ENCODE measurements at regions of chr1 and their contacts with region 1.

Region 1: DNA sequence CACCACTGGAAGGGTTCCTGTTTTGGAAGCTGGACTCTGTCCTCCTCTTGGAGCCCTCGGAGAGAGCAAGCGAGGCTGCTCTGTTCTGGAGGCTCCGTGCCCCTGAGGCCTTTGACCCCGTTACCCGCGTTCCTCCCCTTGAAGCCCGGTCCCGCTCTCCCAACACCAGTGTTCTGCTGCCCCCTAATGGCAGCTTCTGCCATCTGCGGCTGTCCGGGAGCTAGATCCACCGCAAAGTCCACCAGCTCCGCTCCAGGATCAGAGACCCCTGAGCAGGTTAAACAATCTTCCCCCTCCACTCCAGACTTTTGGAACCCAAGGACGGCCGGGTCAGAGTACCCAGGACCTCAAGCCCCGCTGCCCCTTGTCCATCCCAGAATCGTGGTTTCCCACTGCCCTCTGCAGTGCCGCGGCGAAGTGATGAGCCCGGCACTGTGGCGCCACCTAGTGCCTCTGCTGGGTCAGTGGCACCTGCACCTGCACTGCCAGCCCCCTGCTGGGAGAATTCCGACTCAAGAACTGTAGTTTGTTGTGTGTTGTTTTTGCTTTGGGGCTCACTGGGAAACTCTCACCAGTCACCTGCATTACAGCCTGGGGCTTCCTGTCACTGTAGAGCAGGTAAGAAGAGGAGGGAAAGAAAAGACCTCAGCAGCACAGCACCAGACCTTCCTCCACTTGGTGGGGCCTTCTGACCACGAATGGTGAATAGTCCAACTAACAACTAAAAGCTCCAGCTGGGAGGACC is 63.5 kb upstream of the NFASC start:
- DNase-seq: peak; percentile 94
- H3K4me3 Mint-ChIP-seq: peak overlapping the region; percentile 69
- H3K27ac Mint-ChIP-seq: no peak overlapping the region
- H3K4me1 Mint-ChIP-seq: no peaks in the 10 kb centered on the region
- H3K27me3 Mint-ChIP-seq: peaks cover 25% of the 10 kb centered on the region
- CTCF ChIP-seq: peak; percentile 99

Region 2: DNA sequence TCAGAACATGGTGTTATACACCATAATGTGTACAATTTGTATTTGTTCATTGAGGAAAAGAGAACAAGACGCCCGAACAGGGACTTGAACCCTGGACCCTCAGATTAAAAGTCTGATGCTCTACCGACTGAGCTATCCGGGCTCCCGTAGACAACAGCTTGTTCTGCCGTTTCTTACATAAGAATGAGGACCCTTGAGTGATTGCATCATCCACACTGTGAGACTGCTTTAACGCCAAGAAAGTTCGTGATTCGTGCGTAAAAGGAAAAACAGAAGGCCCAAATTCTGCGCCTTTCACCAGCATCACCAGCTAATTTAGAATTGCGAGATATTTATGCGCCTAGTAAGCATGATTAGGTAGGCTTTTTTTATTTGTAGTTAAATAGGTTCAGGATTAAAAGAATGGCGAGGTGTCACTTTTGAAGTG is 300.1 kb before region 1 on chr1:
- CTCF ChIA-PET with region 1: interaction called, 47 read pairs
- POLR2A ChIA-PET with region 1: interaction called, 8 read pairs
- intact Hi-C with region 1: loop called (anchors 1 kb)
- DNase-seq: peak; percentile 98
- H3K4me3 Mint-ChIP-seq: peak overlapping the region; percentile 77
- H3K27ac Mint-ChIP-seq: peak overlapping the region; percentile 90
- H3K4me1 Mint-ChIP-seq: peaks cover 29% of the 10 kb centered on the region
- H3K27me3 Mint-ChIP-seq: no peaks in the 10 kb centered on the region
- CTCF ChIP-seq: no peak

Region 3: DNA sequence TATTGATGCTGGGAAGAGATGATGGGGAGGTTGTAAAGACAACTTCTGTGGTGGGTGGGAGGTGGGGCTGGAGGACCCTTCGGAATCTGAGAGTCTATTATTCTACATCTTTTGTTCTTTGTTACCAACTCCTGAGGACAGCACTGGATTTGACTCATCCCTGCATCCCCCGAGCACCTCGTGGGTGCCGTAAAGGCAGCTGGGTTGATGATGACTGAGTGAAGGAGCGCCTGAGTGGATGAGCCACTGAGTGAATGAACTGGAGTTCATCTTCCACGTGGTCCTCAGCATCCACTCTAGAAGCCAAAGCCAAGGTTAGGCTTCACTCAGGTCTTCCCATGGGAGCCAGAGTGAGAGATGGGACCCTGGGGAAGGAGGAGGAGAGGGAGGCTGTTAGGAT is 199.2 kb before region 1 on chr1:
- CTCF ChIA-PET with region 1: interaction called, 19 read pairs
- POLR2A ChIA-PET with region 1: no interaction called
- intact Hi-C with region 1: no loop called
- DNase-seq: no peak
- H3K4me3 Mint-ChIP-seq: no peak overlapping the region
- H3K27ac Mint-ChIP-seq: no peak overlapping the region
- H3K4me1 Mint-ChIP-seq: no peaks in the 10 kb centered on the region
- H3K27me3 Mint-ChIP-seq: peaks cover 67% of the 10 kb centered on the region
- CTCF ChIP-seq: no peak

Region 4: GRCh38 chr1:204697893-204698292 is 109.2 kb before region 1 on chr1:
- CTCF ChIA-PET with region 1: interaction called, 24 read pairs
- POLR2A ChIA-PET with region 1: no interaction called
- intact Hi-C with region 1: no loop called
- DNase-seq: peak; percentile 94
- H3K4me3 Mint-ChIP-seq: no peak overlapping the region
- H3K27ac Mint-ChIP-seq: peak overlapping the region; percentile 43
- H3K4me1 Mint-ChIP-seq: peaks cover 18% of the 10 kb centered on the region
- H3K27me3 Mint-ChIP-seq: no peaks in the 10 kb centered on the region
- CTCF ChIP-seq: no peak

Region 5: DNA sequence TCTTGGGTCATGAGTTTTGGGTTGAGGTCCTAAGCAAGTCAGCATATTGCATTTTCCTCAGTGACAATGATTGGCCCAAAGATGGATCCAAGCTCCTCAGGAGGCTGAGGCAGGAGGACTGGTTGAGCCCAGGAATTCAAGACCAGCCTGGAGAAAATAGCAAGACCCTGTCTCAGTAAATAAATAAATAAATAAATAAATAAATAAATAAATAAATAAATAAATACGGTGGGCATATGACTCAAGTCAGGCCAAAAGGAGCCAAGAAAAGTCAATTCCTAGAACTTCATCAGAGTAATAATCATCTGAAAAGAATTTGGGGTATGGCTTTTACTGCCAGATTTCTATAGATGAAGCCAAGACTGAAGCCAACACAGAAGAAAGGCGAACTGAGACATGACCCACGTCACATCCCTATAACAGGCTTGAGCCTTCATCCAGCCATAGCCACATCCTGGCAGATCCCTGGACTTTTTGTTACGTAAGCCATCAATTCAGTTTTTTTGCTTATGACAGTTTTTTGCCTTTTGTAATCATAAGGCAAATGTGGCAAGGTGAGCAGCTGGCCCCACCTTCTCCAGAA is 24.9 kb before region 1 on chr1:
- CTCF ChIA-PET with region 1: interaction called, 32 read pairs
- POLR2A ChIA-PET with region 1: no interaction called
- intact Hi-C with region 1: no loop called
- DNase-seq: peak; percentile 27
- H3K4me3 Mint-ChIP-seq: no peak overlapping the region
- H3K27ac Mint-ChIP-seq: no peak overlapping the region
- H3K4me1 Mint-ChIP-seq: no peaks in the 10 kb centered on the region
- H3K27me3 Mint-ChIP-seq: peaks cover 54% of the 10 kb centered on the region
- CTCF ChIP-seq: no peak

Region 6: GRCh38 chr1:204924013-204924967 is 117.2 kb after region 1 on chr1:
- CTCF ChIA-PET with region 1: interaction called, 13 read pairs
- POLR2A ChIA-PET with region 1: no interaction called
- intact Hi-C with region 1: no loop called
- DNase-seq: no peak
- H3K4me3 Mint-ChIP-seq: no peak overlapping the region
- H3K27ac Mint-ChIP-seq: no peak overlapping the region
- H3K4me1 Mint-ChIP-seq: peaks cover 7% of the 10 kb centered on the region
- H3K27me3 Mint-ChIP-seq: no peaks in the 10 kb centered on the region
- CTCF ChIP-seq: no peak

Measured in MCF 10A (cell line).